Transverse colon (tissue), 4 donors: ENCODE measurements at regions of chr12 and their contacts with region 1.

Region 1: DNA sequence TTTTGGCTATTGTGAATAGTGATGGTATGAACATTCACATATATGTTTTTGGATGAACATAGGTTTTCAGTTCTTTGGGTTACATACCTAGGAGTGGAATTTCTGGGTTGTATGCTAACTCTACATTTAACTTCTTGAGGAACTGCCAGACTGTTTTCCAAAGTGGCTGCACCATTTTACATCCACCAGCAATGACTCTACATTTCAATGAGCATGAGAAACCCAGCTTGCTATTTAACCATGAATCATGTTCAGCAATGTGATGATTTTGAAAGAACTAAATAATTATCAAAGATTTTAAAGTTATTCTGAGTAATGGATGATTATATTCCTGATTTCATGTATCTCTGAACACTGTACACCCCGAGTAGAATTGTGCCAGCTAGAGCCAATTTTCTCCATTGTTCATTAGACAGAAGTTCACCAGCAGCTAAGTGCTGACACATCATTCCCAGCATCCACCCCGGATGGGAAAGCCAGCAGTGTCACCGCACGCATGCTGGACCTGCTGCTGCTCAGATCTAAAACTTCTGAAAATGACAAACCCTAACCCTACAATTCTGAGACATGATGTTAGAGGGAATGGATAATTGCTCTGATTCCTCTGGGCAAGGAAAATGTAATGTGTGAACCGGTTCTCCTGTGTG is 13.3 kb upstream of the ANAPC5 start:
- DNase-seq: no peak
- H3K4me3 ChIP-seq: no peak overlapping the region
- H3K27ac ChIP-seq: no peak overlapping the region
- H3K4me1 ChIP-seq: no peaks in the 10 kb centered on the region
- H3K27me3 ChIP-seq: no peaks in the 10 kb centered on the region
- CTCF ChIP-seq: no peak
- EP300 ChIP-seq: no peak
- POLR2A ChIP-seq: no peak

Region 2: GRCh38 chr12:121391619-121392324 is 26.2 kb after region 1 on chr12:
- in situ Hi-C with region 1: no loop called
- intact Hi-C with region 1: loop called (anchors 1 kb)
- DNase-seq: peak; percentile 38
- H3K4me3 ChIP-seq: peak overlapping the region in 1 of 4 donors; percentile 29
- H3K27ac ChIP-seq: peak overlapping the region; percentile 4 to 50 (median 19)
- H3K4me1 ChIP-seq: peaks cover 0 to 6% (median 0%) of the 10 kb centered on the region in 4 donors
- H3K27me3 ChIP-seq: no peaks in the 10 kb centered on the region
- CTCF ChIP-seq: no peak
- EP300 ChIP-seq: no peak
- POLR2A ChIP-seq: no peak